ENCODE measurements at regions of chr1 and their contacts with region 1.

Region 1: GRCh38 chr1:245156081-245156735 is 1.4 kb downstream of the KIF26B start:
- DNase-seq: peak; percentile 91 to 95
- H3K4me3 ChIP-seq: peak overlapping the region; percentile 64 to 71 (median 66)
- H3K27ac ChIP-seq: peak overlapping the region; percentile 51 to 75 (median 68)
- H3K4me1 ChIP-seq: peaks cover 35 to 47% (median 44%) of the 10 kb centered on the region in 4 donors
- H3K27me3 ChIP-seq: peaks cover 0 to 51% (median 38%) of the 10 kb centered on the region in 3 donors
- CTCF ChIP-seq: peak in 5 of 7 experiments; percentile 43 to 76 (median 74)
- EP300 ChIP-seq: no peak
- POLR2A ChIP-seq: no peak

Region 2: GRCh38 chr1:245290836-245291235 is 134.6 kb after region 1 on chr1:
- intact Hi-C with region 1: no loop called
- DNase-seq: no peak
- H3K4me3 ChIP-seq: no peak overlapping the region
- H3K27ac ChIP-seq: no peak overlapping the region
- H3K4me1 ChIP-seq: peaks cover 0 to 8% (median 2%) of the 10 kb centered on the region in 4 donors
- H3K27me3 ChIP-seq: no peaks in the 10 kb centered on the region
- CTCF ChIP-seq: no peak
- EP300 ChIP-seq: no peak
- POLR2A ChIP-seq: no peak

Region 3: DNA sequence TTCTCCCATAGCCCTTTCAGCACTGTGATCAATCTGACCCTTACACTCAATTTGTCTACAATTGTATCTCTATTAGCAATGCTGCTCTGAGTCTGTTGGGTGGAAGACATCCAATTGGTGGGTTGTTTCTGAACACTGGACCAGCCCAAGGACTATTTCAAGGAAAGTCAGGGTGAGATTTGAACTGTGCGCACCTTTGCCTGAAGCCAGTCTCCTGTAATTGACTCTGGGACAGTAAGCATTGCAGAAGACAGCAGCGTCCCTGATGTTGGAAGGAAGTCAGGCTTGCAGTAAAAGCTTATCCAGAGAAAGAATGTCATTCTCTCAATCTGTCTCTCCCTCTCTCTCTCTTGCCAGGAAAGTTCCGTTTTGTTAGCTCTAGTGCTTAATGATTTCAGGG is 232.5 kb after region 1 on chr1:
- intact Hi-C with region 1: no loop called
- DNase-seq: no peak
- H3K4me3 ChIP-seq: no peak overlapping the region
- H3K27ac ChIP-seq: no peak overlapping the region
- H3K4me1 ChIP-seq: peaks cover 0 to 12% (median 0%) of the 10 kb centered on the region in 4 donors
- H3K27me3 ChIP-seq: no peaks in the 10 kb centered on the region
- CTCF ChIP-seq: no peak
- EP300 ChIP-seq: no peak
- POLR2A ChIP-seq: no peak

Region 4: GRCh38 chr1:246002725-246003441 is 846.7 kb after region 1 on chr1:
- intact Hi-C with region 1: loop called (anchors 5 kb)
- DNase-seq: peak; percentile 94 to 95
- H3K4me3 ChIP-seq: no peak overlapping the region
- H3K27ac ChIP-seq: no peak overlapping the region
- H3K4me1 ChIP-seq: peaks cover 3 to 36% (median 16%) of the 10 kb centered on the region in 4 donors
- H3K27me3 ChIP-seq: no peaks in the 10 kb centered on the region
- CTCF ChIP-seq: peak in 5 of 7 experiments; percentile 70 to 94 (median 83)
- EP300 ChIP-seq: no peak
- POLR2A ChIP-seq: no peak

Region 5: DNA sequence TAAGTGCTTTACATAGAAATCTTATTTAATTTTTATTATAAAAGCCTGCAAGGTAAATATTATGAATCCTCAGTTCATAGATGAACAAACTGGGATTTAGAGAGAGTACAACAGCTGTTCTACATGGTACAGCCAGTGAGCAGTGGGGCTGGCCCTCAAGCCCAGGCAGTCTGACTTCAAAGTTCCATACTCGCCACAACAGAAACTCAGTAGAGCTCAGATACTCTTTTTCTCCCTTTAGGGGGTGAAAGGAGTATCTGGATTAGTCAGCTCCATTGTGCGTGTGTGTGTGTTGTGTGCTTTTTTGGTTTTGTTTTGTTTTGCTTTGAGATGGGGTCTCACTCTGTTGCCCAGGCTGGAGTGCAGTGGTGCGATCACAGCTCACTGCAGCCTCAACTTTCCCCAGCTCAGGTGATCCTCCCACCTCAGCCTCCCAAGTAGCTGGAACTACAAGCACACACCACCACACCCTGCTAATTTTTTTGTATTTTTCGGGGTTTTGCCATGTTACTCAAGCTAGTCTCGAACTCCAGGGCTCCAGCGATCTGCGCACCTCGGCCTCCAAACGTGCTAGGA is 972.4 kb after region 1 on chr1:
- intact Hi-C with region 1: loop called (anchors 10 kb)
- DNase-seq: no peak
- H3K4me3 ChIP-seq: no peak overlapping the region
- H3K27ac ChIP-seq: no peak overlapping the region
- H3K4me1 ChIP-seq: peaks cover 0 to 8% (median 0%) of the 10 kb centered on the region in 4 donors
- H3K27me3 ChIP-seq: no peaks in the 10 kb centered on the region
- CTCF ChIP-seq: no peak
- EP300 ChIP-seq: no peak
- POLR2A ChIP-seq: no peak